ENCODE measurements at regions of chr2 and their contacts with region 1.

Region 1: GRCh38 chr2:197113275-197113711 is 186.8 kb upstream of the PGAP1 start:
- DNase-seq: no peak
- ATAC-seq: no peak

Region 2: GRCh38 chr2:196902828-196903227 is 210.5 kb before region 1 on chr2:
- intact Hi-C with region 1: no loop called
- DNase-seq: no peak
- ATAC-seq: no peak

Region 3: GRCh38 chr2:197168705-197169104 is 55.4 kb after region 1 on chr2:
- intact Hi-C with region 1: loop called in 1 of 2 experiments (anchors 5 kb)
- DNase-seq: peak; percentile 72
- ATAC-seq: peak in 1 of 2 donors; percentile 64

Region 4: GRCh38 chr2:197184959-197185586 is 71.8 kb after region 1 on chr2:
- intact Hi-C with region 1: loop called in 1 of 2 experiments (anchors 5 kb)
- DNase-seq: peak; percentile 83
- ATAC-seq: peak; percentile 92 to 93

Region 5: DNA sequence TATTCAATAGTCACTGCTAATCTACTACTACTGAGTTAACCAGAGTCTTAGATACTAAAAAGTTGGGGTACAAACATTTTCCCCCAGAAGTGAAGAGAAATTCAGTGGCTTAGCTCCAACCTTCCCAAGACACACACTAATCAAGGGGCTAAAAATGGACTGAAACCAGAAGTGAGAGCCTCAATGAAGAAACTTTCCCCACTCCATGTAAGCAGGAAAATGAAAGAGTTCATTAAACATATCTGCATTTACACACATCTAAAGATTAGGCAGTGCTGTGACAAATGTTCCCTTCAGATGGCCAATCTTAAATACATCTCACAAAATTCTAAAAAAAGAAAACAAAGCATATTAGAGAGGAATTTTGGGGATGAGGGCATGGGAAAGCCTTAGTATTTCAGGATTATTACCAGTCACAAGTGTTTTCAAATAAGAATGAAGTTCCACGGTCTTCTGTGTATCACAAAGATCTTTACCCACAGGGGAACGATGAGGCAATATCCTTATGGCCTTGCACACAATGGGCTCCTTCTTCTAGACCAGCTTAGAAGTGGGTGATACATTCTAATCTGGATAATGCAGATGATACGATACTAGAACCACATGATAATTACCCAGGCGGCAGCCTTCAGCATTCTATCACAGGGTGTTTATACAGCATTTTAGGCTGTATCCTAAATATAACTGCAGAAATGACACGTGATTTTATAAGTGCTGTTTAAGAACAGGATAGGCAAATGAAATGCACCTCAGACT is 180.1 kb after region 1 on chr2:
- intact Hi-C with region 1: no loop called
- DNase-seq: no peak
- ATAC-seq: peak; percentile 66 to 69

Region 6: DNA sequence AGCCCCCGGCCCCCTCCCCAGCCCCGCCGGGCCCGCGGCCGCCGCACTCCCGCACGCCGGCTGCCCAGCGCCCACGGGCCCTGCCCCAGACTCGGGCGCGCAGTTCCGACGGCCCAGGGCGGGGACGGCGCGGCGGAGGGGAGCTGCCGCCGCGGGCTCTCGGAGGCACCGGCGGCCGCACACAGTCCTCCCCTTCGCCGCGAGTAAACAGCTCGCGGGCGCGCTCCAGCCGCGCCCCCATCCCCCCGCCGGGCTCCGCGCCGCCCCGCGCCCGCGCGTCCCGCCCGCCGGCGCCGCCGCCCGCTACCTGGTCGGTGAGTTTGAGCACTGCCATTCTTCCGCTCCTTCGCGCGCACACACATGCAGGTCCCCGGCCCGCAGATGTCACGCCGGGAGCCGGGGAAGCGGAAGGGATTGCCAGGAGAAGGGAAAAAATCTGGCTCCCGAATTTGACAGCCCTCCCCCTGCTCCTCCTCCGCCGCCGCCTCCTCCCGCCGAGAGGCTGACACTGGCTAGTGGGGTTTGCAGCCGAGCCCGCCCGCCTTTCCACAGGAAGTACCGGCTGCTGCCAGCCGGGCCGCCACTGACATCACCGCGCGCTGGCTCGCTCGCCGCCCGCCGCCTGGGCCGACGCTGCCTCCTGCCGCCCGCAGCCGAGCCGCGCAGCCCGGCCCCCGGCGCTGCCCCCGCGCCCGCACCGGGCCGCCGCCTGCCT is 197.1 kb after region 1 on chr2 and contains the start of gene ANKRD44:
- intact Hi-C with region 1: loop called (anchors 5 kb)
- DNase-seq: peak; percentile 95
- ATAC-seq: peak; percentile 97 to 98
- total RNA-seq, gene ANKRD44: 10.2 to 16.8 TPM

Region 7: GRCh38 chr2:197356136-197356535 is 242.8 kb after region 1 on chr2:
- intact Hi-C with region 1: no loop called
- DNase-seq: no peak
- ATAC-seq: no peak

Region 8: DNA sequence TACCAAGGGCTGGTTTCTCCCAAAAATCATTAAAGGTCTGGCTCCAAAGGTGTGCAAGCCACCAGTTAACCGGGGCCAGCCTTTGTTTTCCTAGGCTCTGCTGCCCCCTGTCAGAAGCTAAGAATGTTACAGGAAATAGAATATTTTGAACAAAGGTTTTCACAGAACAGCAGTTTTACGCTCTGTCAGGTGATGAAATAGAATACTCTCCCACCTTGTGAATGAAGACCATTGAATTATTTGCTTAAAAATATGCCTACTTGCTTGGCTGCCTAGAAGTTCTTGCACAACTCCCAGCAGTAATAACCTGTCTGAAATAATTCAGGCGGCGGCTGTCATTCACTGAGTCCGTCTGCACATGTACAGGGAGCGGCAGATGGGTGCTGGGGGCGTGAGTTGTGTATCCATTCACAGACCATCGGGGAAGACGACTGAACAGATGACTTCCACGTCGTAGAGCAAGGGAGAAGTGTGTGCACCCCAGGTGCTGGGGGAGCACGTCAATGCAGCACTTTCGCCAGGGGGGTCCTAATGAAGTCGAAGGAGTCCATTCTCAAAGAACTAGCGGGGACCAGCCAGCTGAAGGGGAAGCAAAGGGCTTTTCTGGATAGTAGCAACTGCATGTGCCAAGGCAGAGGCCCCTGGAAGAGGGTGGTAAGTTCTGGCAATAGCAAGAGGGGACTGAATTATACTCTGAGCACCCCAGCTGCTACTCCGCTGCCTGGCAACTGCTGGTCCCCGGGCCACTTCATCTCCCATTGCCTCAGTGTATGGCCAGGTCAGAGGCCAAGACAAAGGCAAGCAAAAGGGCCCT is 265.4 kb after region 1 on chr2:
- intact Hi-C with region 1: loop called (anchors 2 to 5 kb)
- DNase-seq: peak; percentile 37
- ATAC-seq: peak; percentile 72 to 85